Left lung (tissue), 14 donors: ENCODE measurements at regions of chr9 and their contacts with region 1.

Region 1: DNA sequence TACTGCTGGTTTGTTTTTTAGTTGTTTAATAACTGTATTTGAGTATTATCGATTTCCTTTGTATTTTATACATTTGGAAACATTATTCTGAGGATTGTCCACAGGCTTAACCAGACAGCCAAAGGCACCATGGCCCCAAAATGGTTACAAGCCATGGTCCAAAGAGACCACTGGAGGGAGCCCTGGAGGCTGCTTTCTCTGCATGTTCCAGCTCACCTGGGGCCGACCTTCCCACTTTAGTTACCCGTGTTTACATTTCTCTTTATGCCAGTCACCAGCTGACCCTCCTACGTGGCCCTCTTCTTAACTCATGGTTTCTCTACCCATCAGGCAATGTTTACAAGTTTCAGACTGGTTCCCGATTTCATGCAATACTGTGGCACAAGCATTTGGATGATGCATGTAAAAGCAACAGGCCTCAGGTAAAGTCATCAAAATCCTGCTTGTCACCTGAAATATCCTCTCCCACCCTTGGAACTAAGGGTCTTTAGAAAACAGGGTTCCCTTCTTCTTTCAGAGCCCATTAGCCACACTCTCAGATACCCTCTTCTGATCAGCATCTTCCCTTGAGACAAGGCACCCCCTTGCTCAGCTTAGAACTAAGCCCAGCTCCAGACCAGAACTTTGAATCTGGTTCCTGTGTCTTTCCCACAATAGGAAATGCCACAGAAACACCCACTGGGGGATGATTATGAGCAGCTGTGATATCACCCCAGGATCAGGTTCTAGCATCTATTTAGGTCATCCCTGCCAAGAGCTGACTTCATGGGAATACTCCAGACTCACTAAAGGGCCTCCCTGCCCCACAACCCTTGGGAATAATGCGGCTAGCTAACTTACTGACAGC is 49.9 kb upstream of the GARNL3 start:
- DNase-seq: peak in 2 of 4 donors; percentile 61 to 75
- ATAC-seq: peak; percentile 91
- H3K4me3 ChIP-seq: no peak overlapping the region
- H3K27ac ChIP-seq: no peak overlapping the region
- H3K4me1 ChIP-seq: no peaks in the 10 kb centered on the region
- H3K27me3 ChIP-seq: no peaks in the 10 kb centered on the region
- CTCF ChIP-seq: peak; percentile 69 to 73

Region 2: DNA sequence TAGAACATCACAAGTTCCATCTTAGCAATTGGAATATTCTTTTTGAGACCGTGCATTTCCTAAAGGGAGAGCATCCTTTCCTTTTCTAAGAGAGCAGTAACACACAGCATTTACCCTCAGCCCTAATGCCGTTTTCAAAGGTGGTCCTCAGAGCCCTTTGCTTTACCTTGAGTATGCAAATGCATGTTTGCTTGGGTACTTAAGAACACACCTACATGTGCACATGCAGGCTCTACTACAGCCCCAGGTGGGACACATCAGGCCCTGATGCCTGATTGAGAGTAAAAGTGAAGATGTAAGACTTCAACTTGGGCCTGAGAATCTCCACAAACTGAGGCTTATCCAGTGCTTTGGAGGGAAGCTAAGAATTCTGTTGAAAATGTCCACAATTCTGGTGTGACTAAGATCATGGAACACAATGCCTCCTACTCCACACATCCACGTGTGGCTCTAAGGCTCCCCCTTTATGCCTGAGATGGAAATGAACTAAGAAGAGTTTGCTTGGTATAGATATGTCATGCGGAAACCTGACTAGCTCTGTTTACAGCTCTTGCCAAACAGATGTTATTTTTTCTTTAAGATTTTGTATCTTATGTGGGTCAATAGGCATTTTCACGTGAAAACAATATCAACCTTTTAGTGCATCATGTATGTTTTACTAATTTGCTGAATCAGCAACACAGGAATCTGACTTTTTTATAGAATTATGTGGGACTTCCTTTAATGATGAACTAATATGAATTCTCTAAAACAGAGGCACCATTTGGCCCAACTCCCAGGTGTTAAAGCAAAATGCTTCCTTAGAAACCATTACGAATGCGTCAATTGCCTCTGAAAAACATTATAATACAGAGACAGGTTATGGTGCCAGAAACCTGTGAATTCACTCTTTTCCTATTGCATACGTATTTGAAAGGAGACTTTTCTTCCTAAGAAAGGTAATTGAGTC is 133.5 kb after region 1 on chr9:
- intact Hi-C with region 1: loop called in 1 of 2 experiments (anchors 10 kb)
- DNase-seq: peak in 1 of 4 donors; percentile 62
- ATAC-seq: peak; percentile 96
- H3K4me3 ChIP-seq: no peak overlapping the region
- H3K27ac ChIP-seq: no peak overlapping the region
- H3K4me1 ChIP-seq: no peaks in the 10 kb centered on the region
- H3K27me3 ChIP-seq: no peaks in the 10 kb centered on the region
- CTCF ChIP-seq: peak; percentile 30 to 42